ENCODE measurements at regions of chr5 and their contacts with region 1.

Region 1: DNA sequence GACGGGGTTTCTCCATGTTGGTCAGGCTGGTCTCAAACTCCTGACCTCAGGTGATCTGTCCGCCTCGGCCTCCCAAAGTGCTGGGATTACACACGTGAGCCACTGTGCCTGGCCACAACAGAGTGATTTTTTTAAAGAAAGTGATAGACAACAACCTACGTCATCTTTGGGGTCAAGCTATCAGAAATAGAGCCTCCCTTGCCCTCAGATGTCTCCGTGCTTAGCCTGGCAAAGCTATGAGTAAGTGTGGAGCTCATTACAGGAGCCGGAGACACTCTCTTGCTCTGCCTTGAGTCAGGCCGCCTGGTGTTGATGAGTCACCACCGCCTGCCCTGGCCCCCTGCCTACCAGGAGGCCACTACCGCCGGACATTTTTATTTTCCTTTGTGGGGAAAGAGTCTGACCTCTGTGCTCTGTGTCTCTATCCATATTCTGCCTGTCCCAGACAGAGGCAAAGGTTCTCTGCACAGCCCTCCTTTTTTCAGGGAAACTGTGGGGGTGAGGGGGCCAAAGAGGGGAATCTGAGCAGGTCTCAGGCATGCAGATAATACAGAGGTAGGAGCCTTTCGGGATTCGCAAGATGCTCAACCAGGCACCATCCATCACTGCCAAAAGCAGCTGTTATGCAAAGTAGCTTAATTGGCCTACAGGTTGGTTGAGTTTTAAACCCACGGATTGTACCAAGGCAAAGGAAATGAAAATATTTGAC is 123.7 kb upstream of the CPEB4 start:
- DNase-seq: peak; percentile 88
- ATAC-seq: peak; percentile 83
- H3K4me3 ChIP-seq: peak overlapping the region; percentile 8 to 44 (median 14); a peak in 3 of 6 replicates
- H3K27ac ChIP-seq: peak overlapping the region; percentile 89
- H3K4me1 ChIP-seq: peaks cover 100% of the 10 kb centered on the region
- H3K27me3 ChIP-seq: no peaks in the 10 kb centered on the region
- CTCF ChIP-seq: 0 out of 2 replicates have a peak, but pooled peaks have one; percentile 22
- EP300 ChIP-seq: peak in 1 of 2 experiments; percentile 70; a peak in 2 of 4 replicates
- POLR2A ChIP-seq: peak; percentile 45 to 68; a peak in 3 of 4 replicates
- RAD21 ChIP-seq: 0 out of 2 replicates have a peak, but pooled peaks have one; percentile 11

Region 2: GRCh38 chr5:172490514-172491461 is 1273.7 kb before region 1 on chr5:
- CTCF ChIA-PET with region 1: no interaction called
- POLR2A ChIA-PET with region 1: no interaction called
- in situ Hi-C with region 1: no loop called
- intact Hi-C with region 1: no loop called
- DNase-seq: no peak
- ATAC-seq: no peak
- H3K4me3 ChIP-seq: no peak overlapping the region
- H3K27ac ChIP-seq: no peak overlapping the region
- H3K4me1 ChIP-seq: no peaks in the 10 kb centered on the region
- H3K27me3 ChIP-seq: peaks cover 7 to 46% of the 10 kb centered on the region in 2 experiments; a peak in 4 of 5 replicates
- CTCF ChIP-seq: no peak
- EP300 ChIP-seq: no peak
- POLR2A ChIP-seq: no peak
- RAD21 ChIP-seq: no peak

Region 3: DNA sequence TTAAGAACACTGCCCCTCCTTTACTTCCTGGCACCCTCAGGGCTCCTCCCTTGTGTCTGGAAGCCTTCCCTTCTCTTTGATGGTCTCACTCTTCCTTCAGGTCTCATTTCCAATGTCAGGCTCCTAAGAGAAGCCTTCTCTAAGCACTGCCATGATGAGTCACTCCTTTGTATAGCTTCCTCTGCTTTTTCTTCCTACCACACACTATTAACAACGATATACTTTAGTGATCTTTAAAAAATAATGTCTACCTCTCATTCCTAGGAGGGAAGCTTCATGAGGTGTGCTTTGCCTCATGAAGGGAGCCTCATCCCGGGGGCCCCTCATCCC is 228.2 kb before region 1 on chr5:
- CTCF ChIA-PET with region 1: no interaction called
- POLR2A ChIA-PET with region 1: no interaction called
- in situ Hi-C with region 1: no loop called
- intact Hi-C with region 1: no loop called
- DNase-seq: no peak
- ATAC-seq: no peak
- H3K4me3 ChIP-seq: no peak overlapping the region
- H3K27ac ChIP-seq: no peak overlapping the region
- H3K4me1 ChIP-seq: no peaks in the 10 kb centered on the region
- H3K27me3 ChIP-seq: peaks cover 0 to 4% of the 10 kb centered on the region in 2 experiments; a peak in 2 of 5 replicates
- CTCF ChIP-seq: no peak
- EP300 ChIP-seq: no peak
- POLR2A ChIP-seq: no peak
- RAD21 ChIP-seq: no peak

Region 4: GRCh38 chr5:173615884-173616576 is 148.4 kb before region 1 on chr5:
- CTCF ChIA-PET with region 1: no interaction called
- POLR2A ChIA-PET with region 1: no interaction called
- in situ Hi-C with region 1: no loop called
- intact Hi-C with region 1: loop called (anchors 5 kb)
- DNase-seq: peak; percentile 76
- ATAC-seq: peak; percentile 78
- H3K4me3 ChIP-seq: peak overlapping the region; percentile 83 to 92 (median 86)
- H3K27ac ChIP-seq: peak overlapping the region; percentile 79
- H3K4me1 ChIP-seq: peaks cover 61% of the 10 kb centered on the region
- H3K27me3 ChIP-seq: no peaks in the 10 kb centered on the region; a peak in 1 of 5 replicates
- CTCF ChIP-seq: peak; percentile 57
- EP300 ChIP-seq: no peak
- POLR2A ChIP-seq: peak in 1 of 2 experiments; percentile 41; a peak in 1 of 4 replicates
- RAD21 ChIP-seq: no peak; the same call in 1 of the 2 replicates

Region 5: GRCh38 chr5:173736923-173737412 is 27.5 kb before region 1 on chr5:
- CTCF ChIA-PET with region 1: no interaction called
- POLR2A ChIA-PET with region 1: interaction called, 4 read pairs
- in situ Hi-C with region 1: no loop called
- intact Hi-C with region 1: loop called (anchors 2 kb)
- DNase-seq: peak; percentile 32
- ATAC-seq: peak; percentile 67
- H3K4me3 ChIP-seq: peak overlapping the region in 1 of 3 experiments; percentile 43; a peak in 2 of 6 replicates
- H3K27ac ChIP-seq: no peak overlapping the region
- H3K4me1 ChIP-seq: peaks cover 42% of the 10 kb centered on the region
- H3K27me3 ChIP-seq: no peaks in the 10 kb centered on the region
- CTCF ChIP-seq: no peak
- EP300 ChIP-seq: no peak
- POLR2A ChIP-seq: no peak
- RAD21 ChIP-seq: no peak

Region 6: DNA sequence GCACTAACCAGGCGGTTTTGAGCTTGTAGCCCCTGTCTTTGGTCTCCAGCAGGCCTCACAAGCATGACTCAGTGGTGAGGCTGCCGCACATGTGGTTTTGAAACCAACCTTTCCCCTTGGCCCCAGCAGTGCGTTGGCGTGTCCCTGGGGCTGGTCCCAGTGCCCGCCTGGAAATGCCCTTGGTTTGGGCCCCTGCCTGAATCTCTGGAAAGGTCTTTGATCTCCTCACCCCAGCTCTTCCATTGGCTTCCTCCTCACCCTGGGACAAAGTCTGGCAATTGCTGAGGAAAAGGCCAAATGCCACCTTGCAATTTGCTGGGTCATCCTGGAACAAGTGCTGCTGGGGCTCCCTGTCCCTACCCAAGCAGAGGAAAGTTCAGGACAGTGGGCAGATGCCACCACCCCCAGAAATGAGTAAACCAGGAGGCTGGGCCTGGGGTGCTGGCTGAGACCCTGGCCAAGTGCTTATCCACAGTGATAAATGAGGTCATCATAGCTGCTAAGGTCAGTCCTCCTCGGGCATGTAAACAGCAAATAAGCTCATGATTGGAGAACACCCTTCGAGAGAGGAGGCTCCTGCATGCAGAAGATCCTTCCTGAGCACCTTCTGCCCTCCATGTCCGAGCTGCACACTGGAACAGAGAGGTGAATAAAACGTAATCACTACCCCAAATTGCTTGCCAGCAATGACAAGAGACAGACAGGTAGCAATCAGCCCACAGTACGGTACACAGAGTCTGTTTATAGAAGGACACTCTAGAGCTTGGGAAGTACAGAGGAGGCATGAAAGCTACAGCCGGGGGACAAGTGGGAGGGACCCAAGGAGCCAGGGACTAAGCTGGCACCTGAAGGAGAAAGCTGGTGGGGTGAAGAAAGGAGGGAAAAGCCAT is 24.8 kb after region 1 on chr5:
- CTCF ChIA-PET with region 1: no interaction called
- POLR2A ChIA-PET with region 1: interaction called, 21 read pairs
- in situ Hi-C with region 1: no loop called
- intact Hi-C with region 1: no loop called
- DNase-seq: peak; percentile 79
- ATAC-seq: peak; percentile 86
- H3K4me3 ChIP-seq: peak overlapping the region in 2 of 3 experiments; percentile 8 to 48; a peak in 2 of 6 replicates
- H3K27ac ChIP-seq: peak overlapping the region; percentile 73
- H3K4me1 ChIP-seq: peaks cover 68% of the 10 kb centered on the region
- H3K27me3 ChIP-seq: no peaks in the 10 kb centered on the region
- CTCF ChIP-seq: no peak
- EP300 ChIP-seq: peak in 1 of 2 experiments; percentile 82; a peak in 2 of 4 replicates
- POLR2A ChIP-seq: no peak
- RAD21 ChIP-seq: no peak; the same call in 1 of the 2 replicates

Region 7: GRCh38 chr5:173823711-173824528 is 59.4 kb after region 1 on chr5:
- CTCF ChIA-PET with region 1: no interaction called
- POLR2A ChIA-PET with region 1: interaction called, 27 read pairs
- in situ Hi-C with region 1: no loop called
- intact Hi-C with region 1: loop called (anchors 5 kb)
- DNase-seq: peak; percentile 98
- ATAC-seq: peak; percentile 86
- H3K4me3 ChIP-seq: peak overlapping the region in 2 of 3 experiments; percentile 38 to 49; a peak in 5 of 6 replicates
- H3K27ac ChIP-seq: peak overlapping the region; percentile 69
- H3K4me1 ChIP-seq: peaks cover 73% of the 10 kb centered on the region
- H3K27me3 ChIP-seq: no peaks in the 10 kb centered on the region
- CTCF ChIP-seq: no peak
- EP300 ChIP-seq: peak in 1 of 2 experiments; percentile 97; a peak in 2 of 4 replicates
- POLR2A ChIP-seq: peak; percentile 25 to 51; a peak in 2 of 4 replicates
- RAD21 ChIP-seq: no peak

Region 8: DNA sequence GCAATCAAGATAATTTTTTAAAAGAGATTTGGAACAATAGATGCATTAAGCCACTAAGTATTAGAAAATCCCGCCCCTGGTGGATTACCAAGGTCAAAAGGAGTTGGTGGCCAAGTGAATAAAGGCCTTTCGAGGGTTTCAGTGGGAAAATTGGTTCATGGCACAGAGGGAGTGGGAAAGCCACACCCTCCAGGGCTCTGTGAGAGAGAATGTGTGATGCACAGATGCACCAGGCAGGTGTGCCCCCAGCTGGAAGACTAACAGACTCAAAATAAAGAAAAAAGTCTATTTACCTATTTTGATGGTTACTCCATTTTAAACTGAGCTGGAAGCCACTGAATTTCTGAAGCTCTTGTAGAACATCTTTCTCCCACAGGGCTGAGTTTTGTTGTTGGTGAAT is 1401.6 kb after region 1 on chr5:
- CTCF ChIA-PET with region 1: no interaction called
- POLR2A ChIA-PET with region 1: no interaction called
- in situ Hi-C with region 1: no loop called
- intact Hi-C with region 1: no loop called
- DNase-seq: no peak
- ATAC-seq: no peak
- H3K4me3 ChIP-seq: no peak overlapping the region
- H3K27ac ChIP-seq: no peak overlapping the region
- H3K4me1 ChIP-seq: no peaks in the 10 kb centered on the region
- H3K27me3 ChIP-seq: no peaks in the 10 kb centered on the region
- CTCF ChIP-seq: no peak
- EP300 ChIP-seq: no peak
- POLR2A ChIP-seq: no peak
- RAD21 ChIP-seq: no peak

Measured in HepG2 (cell line).